ENCODE measurements at regions of chr13 and their contacts with region 1.

Region 1: GRCh38 chr13:95406176-95406575 is 104.9 kb upstream of the ABCC4 start:
- DNase-seq: no peak
- H3K4me3 ChIP-seq: no peak overlapping the region
- H3K27ac ChIP-seq: no peak overlapping the region
- H3K4me1 ChIP-seq: peaks cover 5 to 8% of the 10 kb centered on the region in 2 donors
- H3K27me3 ChIP-seq: no peaks in the 10 kb centered on the region
- CTCF ChIP-seq: no peak
- POLR2A ChIP-seq: no peak

Region 2: GRCh38 chr13:95185851-95186250 is 220.3 kb before region 1 on chr13:
- intact Hi-C with region 1: loop called (anchors 5 kb)
- DNase-seq: no peak
- H3K4me3 ChIP-seq: no peak overlapping the region
- H3K27ac ChIP-seq: no peak overlapping the region
- H3K4me1 ChIP-seq: peaks cover 5% of the 10 kb centered on the region in 2 donors
- H3K27me3 ChIP-seq: no peaks in the 10 kb centered on the region
- CTCF ChIP-seq: no peak
- POLR2A ChIP-seq: no peak

Region 3: DNA sequence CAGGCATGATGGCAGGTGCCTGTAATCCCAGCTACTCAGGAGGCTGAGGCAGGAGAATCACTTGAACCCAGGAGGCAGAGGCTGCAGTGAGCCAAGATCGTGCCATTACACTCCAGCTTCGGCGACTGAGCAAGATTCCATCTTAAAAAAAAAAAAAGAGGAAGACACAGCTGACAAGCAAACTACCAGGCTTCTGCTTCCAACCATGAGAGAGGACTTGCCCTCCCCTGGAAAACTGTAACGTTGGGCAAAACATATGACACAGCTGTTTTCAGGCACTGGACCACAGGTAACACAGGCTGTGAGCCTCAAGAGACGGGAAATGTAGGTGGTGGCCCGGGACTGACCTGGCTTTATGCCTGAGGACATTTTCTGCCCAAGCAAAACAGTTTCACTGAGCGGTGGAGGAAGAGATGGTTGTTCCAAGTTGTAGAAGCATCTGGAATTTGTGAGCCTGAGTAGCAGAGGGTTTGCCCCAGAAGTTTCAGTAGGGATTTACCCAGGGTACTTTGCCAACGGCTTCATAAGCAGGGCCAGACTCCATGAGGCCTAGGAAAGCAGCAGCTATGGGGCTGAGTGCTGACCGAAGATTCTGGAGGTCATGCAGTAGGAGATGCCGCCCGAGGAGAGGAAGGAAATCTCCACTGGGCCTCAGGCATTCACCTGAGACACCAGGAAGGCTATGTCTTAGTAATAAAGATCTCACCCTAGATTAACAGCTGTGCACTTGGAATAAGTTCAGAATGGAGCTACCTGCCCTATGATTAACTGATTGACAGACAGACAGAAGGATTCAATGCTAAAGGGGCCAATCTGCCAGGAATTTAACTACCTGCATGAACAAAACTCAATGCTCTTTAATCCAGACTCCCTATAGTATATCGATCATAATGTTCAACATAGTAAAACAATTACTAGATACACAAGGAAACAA is 192.9 kb before region 1 on chr13:
- intact Hi-C with region 1: no loop called
- DNase-seq: no peak
- H3K4me3 ChIP-seq: no peak overlapping the region
- H3K27ac ChIP-seq: no peak overlapping the region
- H3K4me1 ChIP-seq: no peaks in the 10 kb centered on the region
- H3K27me3 ChIP-seq: no peaks in the 10 kb centered on the region
- CTCF ChIP-seq: no peak
- POLR2A ChIP-seq: no peak

Measured in thyroid gland (tissue), 4 donors.